Activated B cell treated with CpG ODN at 0.5 μM for 24 hours (primary cell): ENCODE measurements at regions of chr16 and their contacts with region 1.

Region 1: GRCh38 chr16:21523411-21524067 is 75.8 kb upstream of the METTL9 start:
- DNase-seq: no peak
- ATAC-seq: no peak
- H3K4me3 Mint-ChIP-seq: no peak overlapping the region
- H3K27ac Mint-ChIP-seq: peak overlapping the region; percentile 39
- H3K4me1 Mint-ChIP-seq: peaks cover 3% of the 10 kb centered on the region
- H3K27me3 Mint-ChIP-seq: no peaks in the 10 kb centered on the region
- CTCF ChIP-seq: no peak

Region 2: GRCh38 chr16:21501909-21502667 is 21.5 kb before region 1 on chr16:
- CTCF ChIA-PET with region 1: no interaction called
- POLR2A ChIA-PET with region 1: interaction called, 28 read pairs
- intact Hi-C with region 1: loop called (anchors 1 kb)
- DNase-seq: peak; percentile 99
- ATAC-seq: peak; percentile 71
- H3K4me3 Mint-ChIP-seq: peak overlapping the region; percentile 89
- H3K27ac Mint-ChIP-seq: peak overlapping the region; percentile 85
- H3K4me1 Mint-ChIP-seq: peaks cover 35% of the 10 kb centered on the region
- H3K27me3 Mint-ChIP-seq: no peaks in the 10 kb centered on the region
- CTCF ChIP-seq: no peak